Mammary epithelial cell (primary cell): ENCODE measurements at regions of chr22 and their contacts with region 1.

Region 1: GRCh38 chr22:23178512-23179254 is 1.6 kb upstream of the BCR start:
- DNase-seq: peak; percentile 32
- H3K4me3 ChIP-seq: no peak overlapping the region
- H3K27ac ChIP-seq: no peak overlapping the region
- H3K4me1 ChIP-seq: peaks cover 27% of the 10 kb centered on the region
- H3K27me3 ChIP-seq: no peaks in the 10 kb centered on the region
- CTCF ChIP-seq: peak; percentile 99

Region 2: GRCh38 chr22:22976033-22976922 is 202.4 kb before region 1 on chr22:
- CTCF ChIA-PET with region 1: no interaction called
- dilution Hi-C with region 1: no loop called
- in situ Hi-C with region 1: no loop called
- intact Hi-C with region 1: no loop called
- DNase-seq: no peak
- H3K4me3 ChIP-seq: no peak overlapping the region
- H3K27ac ChIP-seq: no peak overlapping the region
- H3K4me1 ChIP-seq: no peaks in the 10 kb centered on the region
- H3K27me3 ChIP-seq: no peaks in the 10 kb centered on the region
- CTCF ChIP-seq: no peak

Region 3: GRCh38 chr22:23204541-23205157 is 26.0 kb after region 1 on chr22:
- CTCF ChIA-PET with region 1: no interaction called
- dilution Hi-C with region 1: no loop called
- in situ Hi-C with region 1: no loop called
- intact Hi-C with region 1: loop called (anchors 1 kb)
- DNase-seq: no peak
- H3K4me3 ChIP-seq: no peak overlapping the region
- H3K27ac ChIP-seq: no peak overlapping the region
- H3K4me1 ChIP-seq: peaks cover 19% of the 10 kb centered on the region
- H3K27me3 ChIP-seq: no peaks in the 10 kb centered on the region
- CTCF ChIP-seq: no peak

Region 4: GRCh38 chr22:23225724-23226496 is 47.2 kb after region 1 on chr22:
- CTCF ChIA-PET with region 1: no interaction called
- dilution Hi-C with region 1: no loop called
- in situ Hi-C with region 1: loop called in 1 of 2 experiments (anchors 10 kb)
- intact Hi-C with region 1: loop called (anchors 2 kb)
- DNase-seq: peak; percentile 84
- H3K4me3 ChIP-seq: peak overlapping the region in 2 of 3 experiments; percentile 27 to 34
- H3K27ac ChIP-seq: peak overlapping the region; percentile 91
- H3K4me1 ChIP-seq: peaks cover 47% of the 10 kb centered on the region
- H3K27me3 ChIP-seq: no peaks in the 10 kb centered on the region
- CTCF ChIP-seq: no peak

Region 5: GRCh38 chr22:23240639-23241389 is 62.1 kb after region 1 on chr22:
- CTCF ChIA-PET with region 1: no interaction called
- dilution Hi-C with region 1: no loop called
- in situ Hi-C with region 1: loop called in 1 of 2 experiments (anchors 10 kb)
- intact Hi-C with region 1: loop called (anchors 1 kb)
- DNase-seq: peak; percentile 15
- H3K4me3 ChIP-seq: no peak overlapping the region
- H3K27ac ChIP-seq: no peak overlapping the region
- H3K4me1 ChIP-seq: peaks cover 13% of the 10 kb centered on the region
- H3K27me3 ChIP-seq: no peaks in the 10 kb centered on the region
- CTCF ChIP-seq: peak; percentile 32 to 58

Region 6: DNA sequence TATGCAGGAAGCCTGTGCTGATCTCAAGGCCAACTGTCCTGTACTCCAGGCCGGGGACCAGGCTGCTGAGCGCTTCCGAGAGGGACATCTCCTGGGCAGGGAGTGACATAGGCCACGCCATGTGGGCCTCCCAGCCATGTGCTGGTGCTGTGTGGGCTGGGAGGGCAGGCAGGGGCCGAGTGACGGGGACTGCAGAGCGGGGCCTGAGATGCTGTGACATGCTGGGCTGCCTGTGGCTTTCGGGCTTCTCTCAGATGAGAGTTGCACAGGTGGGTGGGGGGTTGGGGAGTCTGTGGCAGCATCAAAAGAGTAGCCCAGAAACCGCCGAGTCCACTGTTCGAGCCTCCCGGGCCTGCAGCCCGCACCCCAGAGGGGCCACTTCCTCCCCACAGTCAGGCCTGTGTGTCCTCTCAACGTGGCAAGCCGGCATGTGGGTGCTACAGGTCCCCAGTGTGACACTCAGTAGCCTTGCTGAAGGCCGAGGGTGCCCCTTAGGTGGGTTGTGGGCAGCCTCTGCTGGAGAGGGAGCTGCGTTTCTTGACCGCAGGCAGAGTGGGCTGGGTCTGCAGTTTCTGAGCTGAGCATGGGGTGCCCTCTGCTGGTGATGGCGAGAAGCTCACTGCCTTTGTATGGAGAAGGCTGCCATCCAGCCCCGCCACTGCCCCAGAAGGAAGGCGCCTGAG is 102.9 kb after region 1 on chr22:
- CTCF ChIA-PET with region 1: interaction called, 10 read pairs
- dilution Hi-C with region 1: no loop called
- in situ Hi-C with region 1: loop called (anchors 5 kb)
- intact Hi-C with region 1: loop called (anchors 1 kb)
- DNase-seq: peak; percentile 81
- H3K4me3 ChIP-seq: peak overlapping the region in 2 of 3 experiments; percentile 15 to 26
- H3K27ac ChIP-seq: peak overlapping the region; percentile 73
- H3K4me1 ChIP-seq: peaks cover 62% of the 10 kb centered on the region
- H3K27me3 ChIP-seq: no peaks in the 10 kb centered on the region
- CTCF ChIP-seq: peak; percentile 90 to 94

Region 7: DNA sequence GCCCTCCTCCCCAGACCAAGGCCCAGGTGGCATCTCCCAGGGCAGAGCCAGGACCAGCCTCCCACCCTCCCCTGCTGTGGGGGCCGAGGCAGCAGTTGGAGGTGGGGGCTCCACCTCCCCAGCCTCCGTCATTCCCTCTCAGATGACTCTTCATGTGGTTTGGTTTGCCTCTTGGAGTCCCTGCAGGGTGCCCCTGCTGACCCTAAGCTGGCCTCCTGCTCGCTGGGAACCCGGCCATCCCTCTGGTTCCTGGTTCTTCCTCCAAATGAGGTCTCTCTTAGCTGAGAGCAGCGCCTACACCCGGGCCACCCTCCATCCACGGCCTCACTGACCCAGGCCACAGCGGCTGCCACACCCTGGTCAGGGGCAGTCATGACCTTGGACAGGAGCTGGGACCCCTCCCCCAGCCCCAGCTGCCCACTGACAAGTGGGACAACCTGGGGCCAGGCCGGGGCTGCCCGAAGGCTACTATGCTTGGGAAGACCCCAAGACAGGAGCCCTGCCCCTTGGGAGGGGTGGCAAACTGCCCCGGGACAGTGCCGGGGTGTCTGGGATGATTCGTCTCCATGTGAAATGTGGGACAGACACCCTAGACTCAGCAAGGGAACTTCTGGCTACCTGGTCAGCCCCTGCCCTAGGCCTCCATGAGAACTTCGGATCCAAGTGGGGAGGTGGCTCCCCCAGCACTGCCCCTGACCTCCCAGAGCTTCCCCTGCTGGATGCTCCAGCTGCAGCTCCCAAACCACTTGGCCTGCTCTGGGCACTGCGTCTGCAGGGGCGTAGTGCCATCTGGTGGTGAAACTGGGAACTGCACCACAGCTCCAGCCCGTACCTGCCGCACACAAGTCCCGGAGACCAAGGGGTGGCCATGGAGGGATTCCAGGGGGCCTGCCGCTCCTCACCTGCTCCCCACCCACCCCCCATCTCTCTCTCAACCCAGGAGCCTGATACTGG is 206.9 kb after region 1 on chr22:
- CTCF ChIA-PET with region 1: interaction called, 4 read pairs
- dilution Hi-C with region 1: loop called (anchors 25 kb)
- in situ Hi-C with region 1: loop called (anchors 10 to 25 kb)
- intact Hi-C with region 1: loop called (anchors 1 kb)
- DNase-seq: peak; percentile 49
- H3K4me3 ChIP-seq: no peak overlapping the region
- H3K27ac ChIP-seq: no peak overlapping the region
- H3K4me1 ChIP-seq: no peaks in the 10 kb centered on the region
- H3K27me3 ChIP-seq: no peaks in the 10 kb centered on the region
- CTCF ChIP-seq: peak; percentile 96 to 98